Activated CD4-positive, alpha-beta T cell treated with anti-CD3 and anti-CD28 coated beads, Interleukin-2, amount 10 ng/mL, durations not matched to agents 24 days and 14 days (primary cell): ENCODE measurements at regions of chr2 and their contacts with region 1.

Region 1: DNA sequence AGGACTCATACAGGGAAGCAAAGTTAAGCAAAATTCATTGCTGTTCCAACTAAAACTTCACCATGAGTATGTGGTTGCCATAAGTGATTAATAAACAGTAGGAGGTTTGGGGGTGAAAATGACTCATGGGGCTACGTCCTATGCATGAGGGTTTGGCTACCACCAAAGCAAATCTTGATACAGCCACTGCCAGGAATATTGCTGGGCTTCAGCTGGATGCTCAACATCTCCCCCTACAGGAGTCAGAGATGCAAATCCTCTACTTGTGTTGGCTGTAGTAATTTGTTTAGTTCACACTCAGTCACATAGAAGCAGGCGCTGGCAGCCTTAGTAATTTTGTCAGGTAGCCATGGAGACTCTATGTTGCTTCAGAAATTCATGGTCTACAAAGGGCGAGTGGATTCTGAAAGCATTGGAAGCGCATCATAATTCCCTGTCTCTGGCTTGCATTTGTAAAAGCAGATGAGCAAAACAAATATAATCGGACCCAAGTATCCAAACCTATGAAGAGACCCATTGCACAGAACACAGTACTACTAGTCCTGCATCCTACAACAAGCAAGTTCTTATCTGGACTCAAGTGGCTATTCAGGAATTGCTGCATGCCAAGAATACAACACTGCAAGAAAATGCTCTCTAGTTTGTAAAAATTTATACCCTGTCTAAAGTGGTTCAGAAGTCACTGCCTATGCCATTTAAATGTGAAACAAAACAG is 76.0 kb downstream of the CD28 start:
- DNase-seq: peak; percentile 89
- H3K4me3 Mint-ChIP-seq: no peak overlapping the region
- H3K27ac Mint-ChIP-seq: peak overlapping the region; percentile 81
- H3K4me1 Mint-ChIP-seq: peaks cover 50% of the 10 kb centered on the region
- H3K27me3 Mint-ChIP-seq: no peaks in the 10 kb centered on the region

Region 2: DNA sequence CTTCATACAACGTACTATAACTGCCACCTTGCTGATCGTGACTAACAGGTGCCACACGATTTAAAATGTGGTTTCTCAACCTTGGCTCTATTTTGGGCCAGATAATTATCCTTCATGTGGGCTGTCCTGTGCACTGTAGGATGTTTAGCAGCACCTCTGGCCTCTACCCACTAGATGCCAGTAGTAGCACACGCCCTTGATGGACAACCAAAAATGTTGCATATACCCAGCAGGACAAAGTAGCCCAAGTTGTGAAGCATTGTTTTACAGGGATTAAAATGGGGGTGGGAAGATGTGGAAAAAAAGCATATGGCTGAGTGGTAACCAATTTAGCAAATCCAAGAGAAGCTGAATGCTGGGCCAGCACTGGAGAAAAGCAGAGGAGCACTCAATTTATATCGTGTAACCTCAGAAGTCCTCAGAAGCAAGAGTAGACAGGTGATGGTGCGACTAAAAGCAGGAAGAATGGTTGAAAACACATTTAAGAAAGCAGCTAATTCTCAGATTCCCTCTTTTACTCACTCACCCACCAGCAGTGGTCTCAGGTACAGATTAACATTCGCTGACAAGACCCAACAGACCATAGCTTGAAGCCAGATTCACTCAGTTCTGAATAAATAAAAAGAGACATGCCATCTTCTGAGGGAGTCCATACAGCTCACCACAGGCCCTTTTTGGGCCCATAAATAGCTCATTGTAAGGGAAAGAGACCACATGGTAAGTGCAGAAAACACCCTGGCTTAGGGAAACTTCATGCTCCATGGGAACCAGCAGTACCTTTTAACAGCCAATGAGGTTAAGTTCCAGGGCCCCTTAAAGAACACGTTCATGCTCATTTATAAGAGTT is 297.9 kb before region 1 on chr2:
- intact Hi-C with region 1: loop called (anchors 1 kb)
- DNase-seq: peak; percentile 84
- H3K4me3 Mint-ChIP-seq: no peak overlapping the region
- H3K27ac Mint-ChIP-seq: peak overlapping the region; percentile 9
- H3K4me1 Mint-ChIP-seq: peaks cover 7% of the 10 kb centered on the region
- H3K27me3 Mint-ChIP-seq: no peaks in the 10 kb centered on the region

Region 3: GRCh38 chr2:203510941-203511305 is 271.5 kb before region 1 on chr2:
- intact Hi-C with region 1: no loop called
- DNase-seq: no peak
- H3K4me3 Mint-ChIP-seq: no peak overlapping the region
- H3K27ac Mint-ChIP-seq: no peak overlapping the region
- H3K4me1 Mint-ChIP-seq: no peaks in the 10 kb centered on the region
- H3K27me3 Mint-ChIP-seq: peaks cover 6% of the 10 kb centered on the region

Region 4: GRCh38 chr2:203656522-203657287 is 125.7 kb before region 1 on chr2:
- intact Hi-C with region 1: loop called (anchors 5 kb)
- DNase-seq: peak; percentile 62
- H3K4me3 Mint-ChIP-seq: peak overlapping the region; percentile 12
- H3K27ac Mint-ChIP-seq: peak overlapping the region; percentile 71
- H3K4me1 Mint-ChIP-seq: peaks cover 37% of the 10 kb centered on the region
- H3K27me3 Mint-ChIP-seq: no peaks in the 10 kb centered on the region

Region 5: DNA sequence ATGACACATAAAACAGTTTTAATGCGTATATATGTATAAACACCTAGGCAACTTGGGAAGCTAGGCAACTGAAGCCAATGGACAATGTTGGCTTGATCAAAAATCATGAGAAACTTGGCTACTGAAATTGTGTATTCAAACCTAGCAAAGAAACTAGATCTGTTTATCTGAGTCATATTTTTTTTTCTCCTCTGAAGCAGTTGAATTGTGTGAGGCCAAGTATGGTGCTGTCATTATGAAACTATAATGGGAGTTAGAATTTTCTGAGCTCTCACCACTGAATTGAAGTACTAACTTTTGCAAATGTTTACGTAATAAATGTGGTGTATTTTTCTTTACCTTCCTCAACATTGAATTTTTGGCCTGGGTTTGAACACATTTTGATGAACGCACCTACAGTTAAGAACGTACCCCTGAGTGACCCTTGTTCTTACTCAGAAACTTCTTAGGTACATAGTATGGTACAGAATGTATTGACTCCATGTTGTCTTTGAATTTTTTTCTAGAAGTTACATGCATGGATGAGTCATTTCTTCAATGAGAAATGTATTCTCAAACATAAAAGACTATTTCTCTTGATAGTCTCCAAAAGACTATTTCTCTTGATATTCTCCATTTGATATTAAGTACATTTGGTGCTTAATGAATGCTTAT is 52.2 kb before region 1 on chr2:
- intact Hi-C with region 1: loop called (anchors 1 kb)
- DNase-seq: peak; percentile 71
- H3K4me3 Mint-ChIP-seq: peak overlapping the region; percentile 71
- H3K27ac Mint-ChIP-seq: peak overlapping the region; percentile 96
- H3K4me1 Mint-ChIP-seq: peaks cover 79% of the 10 kb centered on the region
- H3K27me3 Mint-ChIP-seq: no peaks in the 10 kb centered on the region

Region 6: DNA sequence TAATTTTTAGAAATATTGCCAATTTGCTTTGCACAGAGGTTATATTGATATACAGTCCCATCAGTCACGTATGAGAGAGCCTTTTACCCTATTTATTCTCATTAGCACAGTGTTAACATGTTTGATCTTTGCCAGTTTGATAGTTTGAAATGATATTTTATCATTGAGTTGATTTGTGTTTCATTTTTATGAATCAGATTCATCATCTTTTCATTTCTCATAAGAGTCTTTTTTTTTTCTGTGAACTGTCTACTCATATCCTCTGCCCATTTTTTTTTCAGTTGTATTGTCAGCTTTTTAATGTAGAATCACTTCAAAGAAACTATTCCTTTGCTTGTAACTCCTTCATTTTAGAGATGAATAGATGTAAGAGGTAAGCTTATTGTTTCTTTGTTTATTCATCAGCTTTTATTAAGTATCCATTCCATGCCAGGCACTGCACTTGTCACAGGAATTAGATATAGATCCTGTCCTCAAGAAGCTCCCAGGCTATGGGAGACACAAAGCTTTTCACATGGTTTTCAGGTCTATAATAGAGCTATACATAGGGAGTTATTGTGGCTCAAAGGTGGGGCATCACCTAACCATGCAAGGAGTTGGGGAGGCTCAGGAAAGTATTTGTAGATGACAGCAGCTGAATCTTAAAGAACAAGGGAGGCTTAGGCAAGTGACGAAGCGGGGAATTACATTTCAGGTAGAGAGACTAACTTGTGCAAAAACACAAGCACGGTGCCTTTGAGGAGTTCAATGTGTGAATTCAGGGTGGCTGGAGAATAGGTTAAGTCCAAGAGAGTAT is 33.9 kb before region 1 on chr2:
- intact Hi-C with region 1: loop called (anchors 1 kb)
- DNase-seq: peak; percentile 67
- H3K4me3 Mint-ChIP-seq: peak overlapping the region; percentile 32
- H3K27ac Mint-ChIP-seq: peak overlapping the region; percentile 91
- H3K4me1 Mint-ChIP-seq: peaks cover 52% of the 10 kb centered on the region
- H3K27me3 Mint-ChIP-seq: no peaks in the 10 kb centered on the region

Region 7: GRCh38 chr2:203804070-203804469 is 21.7 kb after region 1 on chr2:
- intact Hi-C with region 1: loop called (anchors 2 kb)
- DNase-seq: peak; percentile 82
- H3K4me3 Mint-ChIP-seq: peak overlapping the region; percentile 40
- H3K27ac Mint-ChIP-seq: peak overlapping the region; percentile 84
- H3K4me1 Mint-ChIP-seq: peaks cover 60% of the 10 kb centered on the region
- H3K27me3 Mint-ChIP-seq: no peaks in the 10 kb centered on the region

Region 8: DNA sequence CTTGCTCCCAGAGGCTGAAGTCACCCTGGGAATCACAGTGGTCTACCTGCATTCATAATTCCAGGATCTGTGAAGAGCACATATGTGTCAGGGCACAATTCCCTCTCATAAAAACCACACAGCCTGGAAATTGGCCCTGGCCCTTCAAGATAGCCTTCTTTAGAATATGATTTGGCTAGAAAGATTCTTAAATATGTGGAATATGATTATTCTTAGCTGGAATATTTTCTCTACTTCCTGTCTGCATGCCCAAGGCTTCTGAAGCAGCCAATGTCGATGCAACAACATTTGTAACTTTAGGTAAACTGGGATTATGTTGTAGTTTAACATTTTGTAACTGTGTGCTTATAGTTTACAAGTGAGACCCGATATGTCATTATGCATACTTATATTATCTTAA is 178.4 kb after region 1 on chr2:
- intact Hi-C with region 1: no loop called
- DNase-seq: no peak
- H3K4me3 Mint-ChIP-seq: no peak overlapping the region
- H3K27ac Mint-ChIP-seq: no peak overlapping the region
- H3K4me1 Mint-ChIP-seq: peaks cover 25% of the 10 kb centered on the region
- H3K27me3 Mint-ChIP-seq: no peaks in the 10 kb centered on the region